ENCODE measurements at regions of chr17 and their contacts with region 1.

Region 1: GRCh38 chr17:47840740-47841603 is at the start of gene SCRN2:
- DNase-seq: peak; percentile 93
- ATAC-seq: peak; percentile 94
- H3K4me3 Mint-ChIP-seq: peak within 1 kb of the TSS; percentile 96
- H3K27ac Mint-ChIP-seq: peak within 1 kb of the TSS; percentile 89
- H3K4me1 Mint-ChIP-seq: peaks cover 33% of the 10 kb centered on the region
- H3K27me3 Mint-ChIP-seq: peaks cover 20% of the 10 kb centered on the region
- total RNA-seq, gene SCRN2: 28.1 to 33.8 TPM

Region 2: GRCh38 chr17:47776330-47777197 is 64.4 kb before region 1 on chr17:
- CTCF ChIA-PET with region 1: no interaction called
- DNase-seq: peak; percentile 55
- ATAC-seq: peak; percentile 84
- H3K4me3 Mint-ChIP-seq: no peak overlapping the region
- H3K27ac Mint-ChIP-seq: no peak overlapping the region
- H3K4me1 Mint-ChIP-seq: no peaks in the 10 kb centered on the region
- H3K27me3 Mint-ChIP-seq: peaks cover 66% of the 10 kb centered on the region

Region 3: GRCh38 chr17:47821424-47822391 is 19.3 kb before region 1 on chr17 and contains the start of gene OSBPL7:
- CTCF ChIA-PET with region 1: interaction called, 11 read pairs
- DNase-seq: peak; percentile 91
- ATAC-seq: peak; percentile 97
- H3K4me3 Mint-ChIP-seq: peak within 1 kb of the TSS; percentile 96
- H3K27ac Mint-ChIP-seq: peak within 1 kb of the TSS; percentile 83
- H3K4me1 Mint-ChIP-seq: peaks cover 27% of the 10 kb centered on the region
- H3K27me3 Mint-ChIP-seq: no peaks in the 10 kb centered on the region
- total RNA-seq, gene OSBPL7: 30.3 to 47.8 TPM

Region 4: DNA sequence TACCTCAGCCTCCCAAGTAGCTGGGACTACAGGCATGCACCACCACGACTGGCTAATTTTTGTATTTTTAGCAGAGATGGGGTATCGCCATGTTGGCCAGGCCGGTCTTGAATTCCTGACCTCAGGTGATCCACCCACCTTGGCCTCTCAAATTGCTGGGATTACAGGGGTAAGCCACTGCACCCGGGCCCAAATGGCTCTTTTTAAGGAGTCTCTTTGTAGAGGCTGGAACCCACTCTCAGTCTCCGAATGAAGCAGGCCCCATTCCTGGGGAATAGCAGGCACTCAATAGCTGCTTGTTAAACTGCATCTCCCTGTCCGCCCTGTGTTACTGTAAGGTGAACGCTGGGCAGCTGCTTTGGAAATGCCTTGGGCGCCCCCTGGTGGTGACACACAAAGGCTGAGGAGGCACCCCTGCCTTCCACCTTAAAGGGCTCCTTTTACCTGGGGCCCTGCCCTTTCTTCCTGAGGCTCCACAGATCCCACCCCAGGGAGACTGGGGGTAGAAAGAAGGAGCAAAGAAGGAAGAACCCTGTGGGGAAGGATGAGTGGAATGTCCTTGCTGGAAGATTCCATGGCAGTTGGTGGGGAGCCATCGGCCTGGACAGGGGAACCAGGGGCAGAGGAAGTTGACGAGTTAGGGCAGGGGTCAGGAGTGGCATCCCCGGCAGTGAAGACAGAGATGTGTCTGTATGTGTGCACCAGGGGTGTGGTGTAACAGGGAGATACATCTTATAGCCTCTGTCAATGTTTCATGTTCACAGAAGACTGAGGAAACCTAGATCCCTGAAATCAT is 49.0 kb after region 1 on chr17:
- CTCF ChIA-PET with region 1: interaction called, 365 read pairs
- DNase-seq: peak; percentile 93
- ATAC-seq: peak; percentile 99
- H3K4me3 Mint-ChIP-seq: no peak overlapping the region
- H3K27ac Mint-ChIP-seq: no peak overlapping the region
- H3K4me1 Mint-ChIP-seq: peaks cover 22% of the 10 kb centered on the region
- H3K27me3 Mint-ChIP-seq: no peaks in the 10 kb centered on the region

Region 5: GRCh38 chr17:47941236-47941994 is 100.4 kb after region 1 on chr17 and contains the start of gene PNPO:
- CTCF ChIA-PET with region 1: interaction called, 12 read pairs
- DNase-seq: peak; percentile 99
- ATAC-seq: peak; percentile 99
- H3K4me3 Mint-ChIP-seq: peak within 1 kb of the TSS; percentile 88
- H3K27ac Mint-ChIP-seq: peak within 1 kb of the TSS; percentile 92
- H3K4me1 Mint-ChIP-seq: peaks cover 59% of the 10 kb centered on the region
- H3K27me3 Mint-ChIP-seq: no peaks in the 10 kb centered on the region
- total RNA-seq, gene PNPO: 28.0 to 30.4 TPM

Region 6: GRCh38 chr17:47970704-47971463 is 129.9 kb after region 1 on chr17 and contains the start of gene CDK5RAP3:
- CTCF ChIA-PET with region 1: interaction called, 34 read pairs
- DNase-seq: peak; percentile 100
- ATAC-seq: peak; percentile 97
- H3K4me3 Mint-ChIP-seq: peak within 1 kb of the TSS; percentile 93
- H3K27ac Mint-ChIP-seq: peak within 1 kb of the TSS; percentile 85
- H3K4me1 Mint-ChIP-seq: peaks cover 28% of the 10 kb centered on the region
- H3K27me3 Mint-ChIP-seq: peaks cover 2% of the 10 kb centered on the region
- total RNA-seq, gene CDK5RAP3: 215 to 262 TPM

Measured in activated CD8-positive, alpha-beta memory T cell treated with anti-CD3 and anti-CD28 coated beads, Interleukin-2, amount 10 ng/mL, durations not matched to agents 7 days and 5 days (primary cell).